ENCODE measurements at regions of chr20 and their contacts with region 1.

Region 1: GRCh38 chr20:3156811-3157619 is 2.6 kb downstream of the FASTKD5 start:
- DNase-seq: no peak
- H3K4me3 Mint-ChIP-seq: peak overlapping the region; percentile 92
- H3K27ac Mint-ChIP-seq: peak overlapping the region; percentile 99
- H3K4me1 Mint-ChIP-seq: peaks cover 19% of the 10 kb centered on the region
- H3K27me3 Mint-ChIP-seq: no peaks in the 10 kb centered on the region
- CTCF ChIP-seq: no peak

Region 2: DNA sequence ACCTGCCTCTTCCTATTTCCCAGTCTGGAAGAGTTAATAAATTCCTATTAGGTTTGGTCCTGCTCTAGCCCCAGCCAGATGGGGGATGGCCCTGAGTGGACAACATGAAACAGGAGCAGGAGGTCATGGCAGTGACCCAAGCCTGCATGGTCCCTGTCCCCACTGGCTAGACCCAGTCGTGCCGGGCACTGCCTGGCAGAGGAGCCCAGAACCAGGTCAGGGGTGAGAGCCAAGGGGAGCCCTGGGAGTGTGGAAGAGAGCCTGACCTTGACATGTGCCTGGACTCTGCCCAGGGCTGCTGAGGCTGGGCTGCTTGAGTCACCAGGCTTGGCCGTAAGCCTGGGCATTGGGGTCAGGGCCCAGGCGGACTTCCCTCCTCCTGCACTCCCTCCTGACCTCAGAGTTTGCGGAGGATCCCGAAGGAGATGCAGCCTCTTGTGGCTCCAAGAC is 76.1 kb before region 1 on chr20:
- CTCF ChIA-PET with region 1: no interaction called
- POLR2A ChIA-PET with region 1: no interaction called
- intact Hi-C with region 1: no loop called
- DNase-seq: peak; percentile 33
- H3K4me3 Mint-ChIP-seq: no peak overlapping the region
- H3K27ac Mint-ChIP-seq: no peak overlapping the region
- H3K4me1 Mint-ChIP-seq: peaks cover 9% of the 10 kb centered on the region
- H3K27me3 Mint-ChIP-seq: peaks cover 37% of the 10 kb centered on the region
- CTCF ChIP-seq: no peak

Region 3: DNA sequence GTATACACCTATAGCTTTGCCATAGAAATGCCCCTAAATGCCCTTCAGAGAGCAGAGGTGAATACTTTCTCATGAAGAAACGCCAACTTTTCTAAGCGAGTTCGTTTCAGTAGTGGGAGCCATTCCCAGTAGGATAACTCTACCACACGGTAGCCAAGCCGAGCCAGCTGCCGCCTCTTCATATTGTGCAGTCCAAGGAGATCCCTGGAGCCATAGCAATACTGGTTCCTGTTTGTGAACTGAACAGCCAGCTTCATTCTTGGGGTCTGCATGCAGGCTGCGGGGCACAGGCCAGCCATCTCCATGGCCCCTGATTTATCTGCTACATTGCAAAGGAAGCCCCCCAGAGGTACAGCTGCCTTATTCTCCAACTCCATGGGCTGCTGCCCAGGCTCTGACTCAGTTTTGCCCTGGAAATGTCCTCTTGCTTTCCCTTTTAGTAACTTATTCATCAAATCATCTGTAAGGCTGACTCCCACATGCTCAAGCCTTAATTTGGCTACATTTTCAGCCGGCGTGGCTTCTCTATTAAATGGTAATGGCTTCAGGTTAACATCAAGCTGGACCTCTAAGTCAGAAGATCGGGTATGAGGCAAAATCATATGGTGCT is 10.2 kb before region 1 on chr20:
- CTCF ChIA-PET with region 1: interaction called, 6 read pairs
- POLR2A ChIA-PET with region 1: interaction called, 14 read pairs
- intact Hi-C with region 1: no loop called
- DNase-seq: no peak
- H3K4me3 Mint-ChIP-seq: no peak overlapping the region
- H3K27ac Mint-ChIP-seq: no peak overlapping the region
- H3K4me1 Mint-ChIP-seq: no peaks in the 10 kb centered on the region
- H3K27me3 Mint-ChIP-seq: no peaks in the 10 kb centered on the region
- CTCF ChIP-seq: no peak

Region 4: GRCh38 chr20:3183896-3184612 is 27.0 kb after region 1 on chr20:
- CTCF ChIA-PET with region 1: no interaction called
- POLR2A ChIA-PET with region 1: interaction called, 15 read pairs
- intact Hi-C with region 1: no loop called
- DNase-seq: no peak
- H3K4me3 Mint-ChIP-seq: no peak overlapping the region
- H3K27ac Mint-ChIP-seq: peak overlapping the region; percentile 14
- H3K4me1 Mint-ChIP-seq: peaks cover 10% of the 10 kb centered on the region
- H3K27me3 Mint-ChIP-seq: no peaks in the 10 kb centered on the region
- CTCF ChIP-seq: no peak

Region 5: GRCh38 chr20:3209257-3209945 is 52.4 kb after region 1 on chr20 and contains the start of gene ITPA:
- CTCF ChIA-PET with region 1: interaction called, 6 read pairs
- POLR2A ChIA-PET with region 1: interaction called, 25 read pairs
- intact Hi-C with region 1: no loop called
- DNase-seq: peak; percentile 49
- H3K4me3 Mint-ChIP-seq: peak within 1 kb of the TSS; percentile 100
- H3K27ac Mint-ChIP-seq: peak within 1 kb of the TSS; percentile 99
- H3K4me1 Mint-ChIP-seq: no peaks in the 10 kb centered on the region
- H3K27me3 Mint-ChIP-seq: no peaks in the 10 kb centered on the region
- CTCF ChIP-seq: no peak
- total RNA-seq, gene ITPA: 69.4 and 97.1 TPM in 2 replicates

Measured in MCF 10A (cell line).